B cell (primary cell): ENCODE measurements at regions of chr6 and their contacts with region 1.

Region 1: GRCh38 chr6:36623547-36624459 is 29.6 kb downstream of the SRSF3 start:
- DNase-seq: peak; percentile 87
- ATAC-seq: peak; percentile 93
- H3K4me3 ChIP-seq: no peak overlapping the region
- H3K4me3 Mint-ChIP-seq: peak overlapping the region; percentile 55
- H3K27ac ChIP-seq: no peak overlapping the region
- H3K27ac Mint-ChIP-seq: peak overlapping the region; percentile 79
- H3K4me1 ChIP-seq: peaks cover 21 to 33% of the 10 kb centered on the region in 2 donors
- H3K4me1 Mint-ChIP-seq: peaks cover 34% of the 10 kb centered on the region
- H3K27me3 ChIP-seq: no peaks in the 10 kb centered on the region
- H3K27me3 Mint-ChIP-seq: no peaks in the 10 kb centered on the region
- CTCF ChIP-seq: peak; percentile 92

Region 2: GRCh38 chr6:36442671-36443470 is 180.9 kb before region 1 on chr6 and contains the starts of genes KCTD20 and PXT1:
- CTCF ChIA-PET with region 1: no interaction called
- POLR2A ChIA-PET with region 1: no interaction called
- intact Hi-C with region 1: no loop called
- DNase-seq: peak; percentile 88
- ATAC-seq: peak; percentile 87
- H3K4me3 ChIP-seq: peak within 1 kb of the TSS; percentile 80 to 97 (median 89)
- H3K4me3 Mint-ChIP-seq: peak within 1 kb of the TSS; percentile 98
- H3K27ac ChIP-seq: peak within 1 kb of the TSS; percentile 76 to 91
- H3K27ac Mint-ChIP-seq: peak within 1 kb of the TSS; percentile 96
- H3K4me1 ChIP-seq: peaks cover 24 to 26% of the 10 kb centered on the region in 2 donors
- H3K4me1 Mint-ChIP-seq: peaks cover 35% of the 10 kb centered on the region
- H3K27me3 ChIP-seq: no peaks in the 10 kb centered on the region
- H3K27me3 Mint-ChIP-seq: no peaks in the 10 kb centered on the region
- CTCF ChIP-seq: no peak
- total RNA-seq, gene KCTD20: 37.5 and 44.3 TPM in 2 replicates
- total RNA-seq, gene PXT1: 0.27 and 0.52 TPM in 2 replicates

Region 3: DNA sequence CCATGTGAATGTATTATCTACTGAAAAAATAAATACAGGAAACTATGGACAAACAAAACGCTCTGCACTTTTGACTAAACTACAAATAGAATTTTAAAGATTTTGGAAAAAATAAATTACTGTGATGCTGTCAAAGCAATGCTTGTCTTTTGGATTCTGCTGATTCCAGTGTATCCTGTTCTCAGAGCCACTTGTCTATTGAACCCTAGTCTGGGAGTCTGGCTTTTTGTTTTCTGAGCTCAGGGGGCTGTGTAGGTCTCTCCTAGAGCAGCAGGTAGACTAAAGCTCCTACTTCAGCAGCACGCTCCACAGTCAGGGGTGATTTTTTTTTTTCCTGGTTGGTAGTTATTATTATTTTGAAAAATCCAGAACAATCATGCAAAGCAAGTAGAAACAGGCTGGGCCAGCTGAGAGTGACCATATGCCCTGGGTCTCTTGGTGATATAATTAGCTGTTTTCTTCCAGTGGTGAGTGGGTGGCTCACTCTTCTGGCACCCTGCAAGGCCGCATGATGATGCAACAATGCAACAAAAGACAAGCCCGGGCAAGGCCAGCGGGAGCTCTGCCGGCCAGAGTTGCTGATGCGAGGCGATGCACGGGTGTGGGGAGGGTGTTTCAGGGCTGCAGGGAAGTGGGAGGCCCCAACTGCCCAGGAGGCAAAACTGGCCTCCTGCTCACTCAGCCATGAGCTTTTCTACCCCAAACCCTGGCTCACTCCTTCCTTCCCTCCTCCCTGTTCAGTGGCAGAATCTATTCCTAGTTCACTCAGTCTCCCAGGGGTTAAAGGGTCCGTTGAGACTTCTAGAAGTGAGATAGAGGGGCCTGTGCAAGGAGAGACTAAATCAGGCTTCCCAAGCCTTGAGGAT is 43.2 kb after region 1 on chr6:
- CTCF ChIA-PET with region 1: interaction called, 7 read pairs
- POLR2A ChIA-PET with region 1: interaction called, 10 read pairs
- intact Hi-C with region 1: no loop called
- DNase-seq: no peak
- ATAC-seq: peak; percentile 31
- H3K4me3 ChIP-seq: no peak overlapping the region
- H3K4me3 Mint-ChIP-seq: no peak overlapping the region
- H3K27ac ChIP-seq: no peak overlapping the region
- H3K27ac Mint-ChIP-seq: no peak overlapping the region
- H3K4me1 ChIP-seq: peaks cover 30 to 42% of the 10 kb centered on the region in 2 donors
- H3K4me1 Mint-ChIP-seq: peaks cover 42% of the 10 kb centered on the region
- H3K27me3 ChIP-seq: no peaks in the 10 kb centered on the region
- H3K27me3 Mint-ChIP-seq: no peaks in the 10 kb centered on the region
- CTCF ChIP-seq: no peak

Region 4: GRCh38 chr6:36724514-36725390 is 100.9 kb after region 1 on chr6:
- CTCF ChIA-PET with region 1: interaction called, 26 read pairs
- POLR2A ChIA-PET with region 1: no interaction called
- intact Hi-C with region 1: loop called (anchors 1 kb)
- DNase-seq: peak; percentile 63
- ATAC-seq: no peak
- H3K4me3 ChIP-seq: no peak overlapping the region
- H3K4me3 Mint-ChIP-seq: peak overlapping the region; percentile 1
- H3K27ac ChIP-seq: no peak overlapping the region
- H3K27ac Mint-ChIP-seq: peak overlapping the region; percentile 26
- H3K4me1 ChIP-seq: peaks cover 51 to 53% of the 10 kb centered on the region in 2 donors
- H3K4me1 Mint-ChIP-seq: peaks cover 58% of the 10 kb centered on the region
- H3K27me3 ChIP-seq: no peaks in the 10 kb centered on the region
- H3K27me3 Mint-ChIP-seq: no peaks in the 10 kb centered on the region
- CTCF ChIP-seq: peak; percentile 21

Region 5: GRCh38 chr6:36735110-36736071 is 111.6 kb after region 1 on chr6:
- CTCF ChIA-PET with region 1: interaction called, 7 read pairs
- POLR2A ChIA-PET with region 1: no interaction called
- intact Hi-C with region 1: loop called (anchors 5 kb)
- DNase-seq: peak; percentile 74
- ATAC-seq: peak; percentile 86
- H3K4me3 ChIP-seq: peak overlapping the region in 4 of 5 experiments; percentile 2 to 44 (median 22)
- H3K4me3 Mint-ChIP-seq: peak overlapping the region; percentile 75
- H3K27ac ChIP-seq: no peak overlapping the region
- H3K27ac Mint-ChIP-seq: peak overlapping the region; percentile 80
- H3K4me1 ChIP-seq: peaks cover 31 to 54% of the 10 kb centered on the region in 2 donors
- H3K4me1 Mint-ChIP-seq: peaks cover 42% of the 10 kb centered on the region
- H3K27me3 ChIP-seq: no peaks in the 10 kb centered on the region
- H3K27me3 Mint-ChIP-seq: no peaks in the 10 kb centered on the region
- CTCF ChIP-seq: peak; percentile 49

Region 6: GRCh38 chr6:36765594-36766398 is 142.0 kb after region 1 on chr6:
- CTCF ChIA-PET with region 1: interaction called, 215 read pairs
- POLR2A ChIA-PET with region 1: no interaction called
- intact Hi-C with region 1: no loop called
- DNase-seq: peak; percentile 88
- ATAC-seq: peak; percentile 91
- H3K4me3 ChIP-seq: peak overlapping the region in 1 of 5 experiments; percentile 9
- H3K4me3 Mint-ChIP-seq: peak overlapping the region; percentile 60
- H3K27ac ChIP-seq: no peak overlapping the region
- H3K27ac Mint-ChIP-seq: peak overlapping the region; percentile 60
- H3K4me1 ChIP-seq: peaks cover 45 to 54% of the 10 kb centered on the region in 2 donors
- H3K4me1 Mint-ChIP-seq: peaks cover 41% of the 10 kb centered on the region
- H3K27me3 ChIP-seq: peaks cover 0 to 3% (median 0%) of the 10 kb centered on the region in 4 experiments
- H3K27me3 Mint-ChIP-seq: no peaks in the 10 kb centered on the region
- CTCF ChIP-seq: peak; percentile 92

Region 7: GRCh38 chr6:37602346-37602745 is 978.5 kb after region 1 on chr6:
- CTCF ChIA-PET with region 1: no interaction called
- POLR2A ChIA-PET with region 1: no interaction called
- intact Hi-C with region 1: no loop called
- DNase-seq: no peak
- ATAC-seq: no peak
- H3K4me3 ChIP-seq: no peak overlapping the region
- H3K4me3 Mint-ChIP-seq: no peak overlapping the region
- H3K27ac ChIP-seq: no peak overlapping the region
- H3K27ac Mint-ChIP-seq: no peak overlapping the region
- H3K4me1 ChIP-seq: no peaks in the 10 kb centered on the region
- H3K4me1 Mint-ChIP-seq: no peaks in the 10 kb centered on the region
- H3K27me3 ChIP-seq: peaks cover 0 to 3% (median 0%) of the 10 kb centered on the region in 4 experiments
- H3K27me3 Mint-ChIP-seq: peaks cover 33% of the 10 kb centered on the region
- CTCF ChIP-seq: no peak